ENCODE measurements at regions of chr11 and their contacts with region 1.

Region 1: DNA sequence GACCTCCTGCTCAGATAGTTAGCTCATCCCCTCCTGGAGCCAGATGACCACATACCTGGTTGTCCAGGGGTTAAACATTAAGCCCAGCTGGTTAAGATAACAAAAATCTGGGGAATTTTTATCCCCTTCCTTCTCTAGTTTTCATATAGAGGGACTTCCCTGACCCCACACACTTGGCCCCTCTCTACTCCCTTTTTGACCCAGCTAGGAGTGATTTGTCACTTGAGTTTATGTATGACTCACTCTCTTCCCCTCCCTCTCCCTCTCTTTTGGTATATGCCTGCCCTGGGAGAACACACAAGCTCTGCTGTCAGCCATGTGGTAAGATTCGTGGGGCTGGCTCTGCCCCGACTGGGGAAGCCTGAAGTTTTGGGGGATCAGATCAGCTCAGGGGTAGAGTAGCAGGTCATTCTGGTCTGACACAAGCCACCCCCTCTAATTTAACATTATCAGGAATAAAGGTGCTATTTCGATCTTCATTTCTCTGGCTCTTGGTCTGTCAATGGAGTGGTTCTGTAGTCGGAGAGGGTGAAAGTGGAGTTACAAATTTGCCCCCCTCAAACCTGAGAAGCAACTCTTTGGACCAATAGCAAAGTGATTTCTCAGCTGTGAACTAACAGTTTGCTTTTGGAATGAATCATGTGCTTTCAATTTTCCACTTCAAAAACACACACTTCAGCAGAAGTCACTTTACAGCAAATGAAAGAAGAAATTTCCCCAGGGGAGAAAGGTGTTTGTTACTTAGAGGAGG is 415.3 kb upstream of the CADM1 start:
- DNase-seq: peak; percentile 42
- CTCF ChIP-seq: no peak

Region 2: GRCh38 chr11:115869780-115870431 is 49.6 kb before region 1 on chr11:
- CTCF ChIA-PET with region 1: interaction called, 11 read pairs
- POLR2A ChIA-PET with region 1: interaction called, 3 read pairs
- DNase-seq: peak; percentile 71
- CTCF ChIP-seq: peak; percentile 72

Region 3: GRCh38 chr11:115900111-115900510 is 19.4 kb before region 1 on chr11:
- CTCF ChIA-PET with region 1: interaction called, 12 read pairs
- POLR2A ChIA-PET with region 1: no interaction called
- DNase-seq: no peak
- CTCF ChIP-seq: no peak

Region 4: DNA sequence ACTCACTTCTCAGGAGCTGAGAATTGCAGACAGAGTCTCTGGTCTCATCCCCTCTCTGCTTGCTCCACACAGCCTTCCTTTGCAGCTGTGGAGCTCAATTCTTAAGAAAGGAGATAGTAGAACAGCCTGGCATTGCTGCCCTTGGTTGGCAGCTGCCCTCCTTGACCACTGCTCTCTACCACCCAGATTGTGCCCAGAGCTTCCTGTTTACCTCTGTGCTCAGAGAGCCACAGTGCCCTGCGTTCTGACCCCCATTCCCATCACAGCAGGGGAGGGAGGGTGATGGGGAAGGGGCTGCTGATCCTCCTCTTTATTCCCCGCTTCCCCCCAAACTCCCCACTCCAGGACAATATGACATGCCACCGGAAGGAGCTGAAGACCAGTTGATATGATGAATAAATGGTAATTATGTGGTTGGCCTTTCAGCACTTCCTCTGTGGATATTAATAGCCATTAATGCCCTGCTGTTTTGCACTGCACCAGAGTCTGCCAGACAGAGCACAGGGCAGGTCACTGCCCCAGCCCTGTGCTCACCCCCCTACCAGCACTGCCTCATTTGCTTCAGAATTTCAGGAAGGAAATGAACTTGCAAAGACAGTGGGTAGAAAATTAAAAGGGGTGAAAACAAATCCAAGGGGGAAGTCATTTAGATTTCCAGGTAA is 11.5 kb after region 1 on chr11:
- CTCF ChIA-PET with region 1: interaction called, 10 read pairs
- POLR2A ChIA-PET with region 1: interaction called, 11 read pairs
- DNase-seq: peak; percentile 18
- CTCF ChIP-seq: no peak

Region 5: DNA sequence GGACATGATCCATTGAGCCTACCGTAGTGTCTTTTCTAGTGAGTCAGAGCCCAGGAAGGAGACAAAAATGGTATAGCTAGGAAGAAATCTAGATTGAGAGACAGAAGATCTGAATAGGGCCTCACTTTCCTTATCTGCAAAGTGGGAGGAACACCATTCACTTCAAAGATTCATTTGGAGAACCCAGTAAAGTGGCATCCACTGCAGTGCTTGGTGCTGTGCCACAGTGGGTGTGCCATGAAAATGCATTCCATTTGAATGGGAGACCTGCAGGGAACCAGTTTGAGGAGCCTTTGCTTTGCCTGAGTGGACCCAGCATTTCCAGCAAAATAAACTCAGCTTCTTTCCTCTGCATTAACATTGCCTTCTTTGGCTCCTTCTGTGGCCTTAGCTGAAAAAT is 55.2 kb after region 1 on chr11:
- CTCF ChIA-PET with region 1: no interaction called
- POLR2A ChIA-PET with region 1: no interaction called
- DNase-seq: no peak
- CTCF ChIP-seq: no peak